MCF 10A (cell line): ENCODE measurements at regions of chr1 and their contacts with region 1.

Region 1: GRCh38 chr1:170967042-170967910 is 31.9 kb downstream of the MROH9 start:
- DNase-seq: peak; percentile 73
- H3K4me3 Mint-ChIP-seq: no peak overlapping the region
- H3K27ac Mint-ChIP-seq: no peak overlapping the region
- H3K4me1 Mint-ChIP-seq: peaks cover 10% of the 10 kb centered on the region
- H3K27me3 Mint-ChIP-seq: no peaks in the 10 kb centered on the region
- CTCF ChIP-seq: peak; percentile 74

Region 2: DNA sequence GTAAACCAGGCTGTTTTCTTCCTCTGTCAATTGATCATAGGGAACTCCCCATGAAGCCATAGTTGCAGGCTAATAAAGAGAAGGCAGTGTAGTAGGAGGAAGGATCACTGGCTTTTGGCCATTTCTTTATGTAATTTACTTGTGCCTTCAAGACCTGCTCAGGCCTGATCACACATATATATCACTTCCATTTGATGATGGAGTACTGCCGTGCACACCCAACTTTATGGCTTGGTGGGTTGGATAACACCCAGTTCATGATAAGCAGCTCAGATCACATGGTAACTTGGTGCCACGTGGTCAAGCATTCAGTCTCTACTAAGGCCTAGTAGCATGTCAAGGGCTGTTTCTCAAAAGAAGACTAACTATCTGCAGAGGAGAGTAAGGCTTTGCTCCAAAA is 27.8 kb before region 1 on chr1:
- CTCF ChIA-PET with region 1: interaction called, 10 read pairs
- POLR2A ChIA-PET with region 1: no interaction called
- intact Hi-C with region 1: no loop called
- DNase-seq: no peak
- H3K4me3 Mint-ChIP-seq: no peak overlapping the region
- H3K27ac Mint-ChIP-seq: no peak overlapping the region
- H3K4me1 Mint-ChIP-seq: no peaks in the 10 kb centered on the region
- H3K27me3 Mint-ChIP-seq: peaks cover 9% of the 10 kb centered on the region
- CTCF ChIP-seq: no peak

Region 3: GRCh38 chr1:170993151-170993550 is 25.9 kb after region 1 on chr1:
- CTCF ChIA-PET with region 1: interaction called, 10 read pairs
- POLR2A ChIA-PET with region 1: no interaction called
- intact Hi-C with region 1: no loop called
- DNase-seq: no peak
- H3K4me3 Mint-ChIP-seq: no peak overlapping the region
- H3K27ac Mint-ChIP-seq: no peak overlapping the region
- H3K4me1 Mint-ChIP-seq: no peaks in the 10 kb centered on the region
- H3K27me3 Mint-ChIP-seq: no peaks in the 10 kb centered on the region
- CTCF ChIP-seq: no peak

Region 4: GRCh38 chr1:171188388-171189266 is 221.4 kb after region 1 on chr1:
- CTCF ChIA-PET with region 1: interaction called, 7 read pairs
- POLR2A ChIA-PET with region 1: no interaction called
- intact Hi-C with region 1: loop called (anchors 1 kb)
- DNase-seq: peak; percentile 87
- H3K4me3 Mint-ChIP-seq: no peak overlapping the region
- H3K27ac Mint-ChIP-seq: no peak overlapping the region
- H3K4me1 Mint-ChIP-seq: no peaks in the 10 kb centered on the region
- H3K27me3 Mint-ChIP-seq: no peaks in the 10 kb centered on the region
- CTCF ChIP-seq: peak; percentile 94

Region 5: GRCh38 chr1:171220581-171221054 is 253.3 kb after region 1 on chr1:
- CTCF ChIA-PET with region 1: interaction called, 262 read pairs
- POLR2A ChIA-PET with region 1: no interaction called
- intact Hi-C with region 1: no loop called
- DNase-seq: no peak
- H3K4me3 Mint-ChIP-seq: peak overlapping the region; percentile 70
- H3K27ac Mint-ChIP-seq: peak overlapping the region; percentile 98
- H3K4me1 Mint-ChIP-seq: peaks cover 61% of the 10 kb centered on the region
- H3K27me3 Mint-ChIP-seq: no peaks in the 10 kb centered on the region
- CTCF ChIP-seq: no peak

Region 6: DNA sequence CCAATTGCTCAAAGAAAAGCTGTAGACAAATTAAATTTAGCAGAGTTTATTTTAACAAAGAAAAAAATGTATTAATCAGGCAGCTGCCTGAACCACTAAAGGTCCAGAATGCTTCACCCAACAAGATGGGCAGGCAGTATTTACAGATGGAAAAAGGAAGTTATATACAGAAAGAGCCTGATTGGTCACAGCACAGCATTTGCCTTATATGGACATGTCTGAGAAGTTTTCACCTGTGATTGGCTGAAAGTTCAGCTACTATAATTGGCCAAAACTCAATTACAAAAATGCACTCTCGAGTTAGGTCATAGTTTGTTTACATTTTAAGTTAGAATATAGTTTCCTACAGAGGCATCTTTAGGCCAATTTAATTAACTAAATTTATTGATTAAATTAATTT is 265.9 kb after region 1 on chr1:
- CTCF ChIA-PET with region 1: interaction called, 262 read pairs
- POLR2A ChIA-PET with region 1: no interaction called
- intact Hi-C with region 1: no loop called
- DNase-seq: no peak
- H3K4me3 Mint-ChIP-seq: no peak overlapping the region
- H3K27ac Mint-ChIP-seq: no peak overlapping the region
- H3K4me1 Mint-ChIP-seq: no peaks in the 10 kb centered on the region
- H3K27me3 Mint-ChIP-seq: no peaks in the 10 kb centered on the region
- CTCF ChIP-seq: no peak

Region 7: DNA sequence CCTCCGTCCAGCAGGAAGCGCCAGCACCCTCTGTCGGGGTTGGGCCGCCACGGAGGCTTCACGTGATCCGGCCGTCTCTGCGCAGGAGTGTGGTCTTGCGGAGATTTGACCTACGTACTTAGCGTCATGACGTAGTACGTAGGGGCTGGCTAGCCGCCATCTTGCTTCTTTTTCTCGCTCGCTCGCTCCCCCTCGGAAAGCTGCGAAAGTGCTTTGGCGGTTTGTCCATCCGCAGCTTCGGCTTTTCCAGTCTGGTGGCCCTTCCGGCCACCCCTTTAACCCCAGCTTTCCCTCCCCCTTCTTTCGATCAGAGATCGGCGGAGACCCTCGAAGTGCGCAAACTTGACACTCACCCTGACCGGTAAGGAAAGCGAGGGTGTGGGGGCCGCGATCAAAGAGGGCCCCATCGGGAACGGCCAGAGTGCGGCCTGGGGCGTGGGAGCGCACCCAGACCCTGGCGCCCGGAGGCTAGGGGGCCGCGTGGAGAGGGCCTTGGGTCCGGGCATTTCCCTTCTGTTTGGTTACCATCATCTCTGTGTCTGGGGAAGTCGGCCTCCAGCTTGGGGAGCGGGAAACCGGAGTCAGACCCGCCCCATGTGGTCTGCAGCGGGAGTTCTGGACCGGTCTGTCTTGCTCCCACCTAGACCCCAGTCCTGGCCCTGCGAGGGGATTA is 518.2 kb after region 1 on chr1 and contains the start of gene PRRC2C:
- CTCF ChIA-PET with region 1: no interaction called
- POLR2A ChIA-PET with region 1: interaction called, 5 read pairs
- intact Hi-C with region 1: loop called (anchors 10 kb)
- DNase-seq: peak; percentile 100
- H3K4me3 Mint-ChIP-seq: peak within 1 kb of the TSS; percentile 80
- H3K27ac Mint-ChIP-seq: peak within 1 kb of the TSS; percentile 92
- H3K4me1 Mint-ChIP-seq: peaks cover 38% of the 10 kb centered on the region
- H3K27me3 Mint-ChIP-seq: no peaks in the 10 kb centered on the region
- CTCF ChIP-seq: peak; percentile 71
- total RNA-seq, gene PRRC2C: 296 and 298 TPM in 2 replicates